WTC11 (cell line): ENCODE measurements at regions of chr2 and their contacts with region 1.

Region 1: GRCh38 chr2:64873472-64873924 is 115.7 kb upstream of the SLC1A4 start:
- DNase-seq: peak; percentile 92
- ATAC-seq: peak; percentile 93
- H3K4me3 Mint-ChIP-seq: no peak overlapping the region
- H3K27ac Mint-ChIP-seq: peak overlapping the region; percentile 79; the same call in 1 of the 2 replicates
- H3K4me1 Mint-ChIP-seq: peaks cover 17% of the 10 kb centered on the region
- H3K27me3 Mint-ChIP-seq: no peaks in the 10 kb centered on the region
- CTCF ChIP-seq: peak; percentile 97

Region 2: DNA sequence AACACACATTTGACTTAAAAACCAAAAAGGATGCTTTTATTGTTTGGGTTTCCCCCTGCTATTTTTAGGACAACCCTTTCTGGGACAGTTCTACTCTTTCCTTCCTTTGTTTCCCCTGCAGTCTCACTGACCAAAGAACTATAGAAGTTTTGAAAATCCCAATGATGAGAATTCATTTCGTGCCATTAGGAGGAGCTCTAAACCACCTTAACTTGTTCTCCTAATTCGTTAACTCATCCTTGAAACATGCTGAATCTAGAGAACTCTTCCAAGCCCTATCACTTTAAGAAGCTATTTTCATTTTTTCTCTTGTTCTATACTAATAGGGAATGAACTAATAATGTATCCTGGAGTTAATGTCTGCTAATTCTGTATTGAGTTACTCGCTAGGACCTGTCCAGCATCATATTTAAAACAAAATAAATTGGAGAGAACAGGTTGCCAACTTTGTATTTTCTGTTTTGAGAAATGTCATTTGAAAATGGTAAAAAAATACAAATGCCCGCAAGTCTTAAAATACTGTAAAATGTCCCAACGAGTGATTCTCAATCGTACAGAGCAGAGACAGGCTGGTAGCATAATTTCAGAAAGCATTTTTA is 286.5 kb before region 1 on chr2:
- CTCF ChIA-PET with region 1: interaction called, 12 read pairs
- POLR2A ChIA-PET with region 1: no interaction called
- DNase-seq: no peak
- ATAC-seq: no peak
- H3K4me3 Mint-ChIP-seq: no peak overlapping the region
- H3K27ac Mint-ChIP-seq: no peak overlapping the region
- H3K4me1 Mint-ChIP-seq: no peaks in the 10 kb centered on the region
- H3K27me3 Mint-ChIP-seq: no peaks in the 10 kb centered on the region
- CTCF ChIP-seq: 0 out of 2 replicates have a peak, but pooled peaks have one; percentile 18

Region 3: DNA sequence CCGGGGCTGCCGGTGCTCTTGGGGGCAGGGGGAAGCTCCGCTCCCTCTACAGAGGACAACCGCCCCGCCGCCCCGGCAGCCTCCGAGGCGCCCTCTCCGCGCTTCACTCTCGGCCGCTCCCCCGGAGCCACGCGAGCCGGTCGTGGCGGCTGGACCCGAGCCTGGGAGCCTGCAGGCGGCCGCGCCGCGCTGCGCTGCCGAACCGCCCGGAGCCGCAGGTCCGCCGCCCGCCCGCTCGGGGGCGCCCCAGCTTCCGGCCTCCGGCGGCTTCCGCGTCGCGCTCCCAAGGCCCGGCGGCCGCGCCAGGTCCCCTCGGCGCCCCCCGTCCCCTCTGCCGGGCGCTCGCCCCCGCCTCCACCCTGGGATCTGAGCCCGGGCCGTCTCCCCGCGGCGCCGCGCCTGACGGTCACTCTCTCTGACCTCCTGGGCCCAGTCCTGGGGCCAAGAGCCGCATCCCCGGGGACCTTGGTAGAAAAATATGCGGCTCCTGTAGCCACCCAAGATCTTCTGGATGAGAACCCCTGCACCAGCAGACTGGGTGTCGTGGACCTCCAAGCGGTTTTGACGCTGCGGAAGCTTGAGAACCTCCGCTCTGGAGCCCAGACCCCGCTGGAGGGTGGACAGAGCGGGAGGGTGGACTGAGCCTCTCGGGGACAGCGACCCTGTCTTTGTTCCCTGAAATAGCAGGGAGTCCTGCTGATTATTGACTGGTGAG is 264.1 kb before region 1 on chr2:
- CTCF ChIA-PET with region 1: interaction called, 12 read pairs
- POLR2A ChIA-PET with region 1: no interaction called
- DNase-seq: peak; percentile 70
- ATAC-seq: peak; percentile 81
- H3K4me3 Mint-ChIP-seq: peak overlapping the region; percentile 74
- H3K27ac Mint-ChIP-seq: no peak overlapping the region
- H3K4me1 Mint-ChIP-seq: peaks cover 7% of the 10 kb centered on the region
- H3K27me3 Mint-ChIP-seq: peaks cover 32% of the 10 kb centered on the region
- CTCF ChIP-seq: no peak; the same call in 1 of the 2 replicates